CD8-positive, alpha-beta T cell (primary cell): ENCODE measurements at regions of chr1 and their contacts with region 1.

Region 1: DNA sequence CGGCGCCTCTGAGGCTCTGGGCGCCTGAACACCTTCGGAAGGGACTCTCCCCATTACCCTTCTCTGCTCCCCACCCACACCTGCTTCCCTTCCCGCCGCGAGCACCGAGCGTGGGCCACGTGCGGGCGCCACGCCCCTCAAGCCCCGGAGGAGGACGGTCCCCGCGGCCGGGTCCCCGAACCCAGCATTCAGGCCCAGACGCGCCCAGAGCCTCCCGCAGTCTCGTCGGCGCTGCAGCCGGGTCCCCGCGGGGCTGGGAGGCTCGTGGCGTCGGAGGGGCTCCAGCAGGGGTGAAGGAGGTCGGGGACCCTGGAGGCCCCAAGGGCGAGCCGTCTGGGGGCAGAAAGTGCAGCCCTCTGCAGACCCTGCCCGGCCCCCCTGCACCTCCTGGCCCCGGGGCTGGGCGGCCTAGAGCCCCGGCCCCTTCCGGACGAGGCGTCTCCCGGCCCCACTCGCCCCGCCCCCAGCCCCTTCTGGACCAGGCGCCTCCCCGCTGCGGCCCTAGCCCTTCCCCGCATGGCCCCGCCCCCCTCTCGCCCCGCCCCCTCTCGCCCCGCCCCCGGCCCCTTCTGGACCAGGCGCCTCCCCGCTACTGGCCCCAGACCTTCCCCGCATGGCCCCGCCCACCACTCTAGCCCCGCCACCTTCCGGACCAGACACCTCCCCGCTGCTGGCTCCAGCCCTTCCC is 378 bp upstream of the SMIM1 start:
- DNase-seq: peak; percentile 70 to 91 (median 87)
- ATAC-seq: peak; percentile 79
- H3K4me3 ChIP-seq: peak overlapping the region; percentile 39 to 71
- H3K4me3 Mint-ChIP-seq: peak overlapping the region; percentile 80
- H3K27ac ChIP-seq: no peak overlapping the region
- H3K27ac Mint-ChIP-seq: no peak overlapping the region
- H3K4me1 ChIP-seq: peaks cover 10% of the 10 kb centered on the region
- H3K4me1 Mint-ChIP-seq: peaks cover 10% of the 10 kb centered on the region
- H3K27me3 ChIP-seq: no peaks in the 10 kb centered on the region
- H3K27me3 Mint-ChIP-seq: peaks cover 3% of the 10 kb centered on the region
- CTCF ChIP-seq: no peak

Region 2: GRCh38 chr1:3732434-3733093 is 39.6 kb before region 1 on chr1:
- CTCF ChIA-PET with region 1: no interaction called
- POLR2A ChIA-PET with region 1: no interaction called
- intact Hi-C with region 1: no loop called
- DNase-seq: no peak
- ATAC-seq: no peak
- H3K4me3 ChIP-seq: no peak overlapping the region
- H3K4me3 Mint-ChIP-seq: no peak overlapping the region
- H3K27ac ChIP-seq: no peak overlapping the region
- H3K27ac Mint-ChIP-seq: no peak overlapping the region
- H3K4me1 ChIP-seq: no peaks in the 10 kb centered on the region
- H3K4me1 Mint-ChIP-seq: no peaks in the 10 kb centered on the region
- H3K27me3 ChIP-seq: no peaks in the 10 kb centered on the region
- H3K27me3 Mint-ChIP-seq: no peaks in the 10 kb centered on the region
- CTCF ChIP-seq: no peak

Region 3: DNA sequence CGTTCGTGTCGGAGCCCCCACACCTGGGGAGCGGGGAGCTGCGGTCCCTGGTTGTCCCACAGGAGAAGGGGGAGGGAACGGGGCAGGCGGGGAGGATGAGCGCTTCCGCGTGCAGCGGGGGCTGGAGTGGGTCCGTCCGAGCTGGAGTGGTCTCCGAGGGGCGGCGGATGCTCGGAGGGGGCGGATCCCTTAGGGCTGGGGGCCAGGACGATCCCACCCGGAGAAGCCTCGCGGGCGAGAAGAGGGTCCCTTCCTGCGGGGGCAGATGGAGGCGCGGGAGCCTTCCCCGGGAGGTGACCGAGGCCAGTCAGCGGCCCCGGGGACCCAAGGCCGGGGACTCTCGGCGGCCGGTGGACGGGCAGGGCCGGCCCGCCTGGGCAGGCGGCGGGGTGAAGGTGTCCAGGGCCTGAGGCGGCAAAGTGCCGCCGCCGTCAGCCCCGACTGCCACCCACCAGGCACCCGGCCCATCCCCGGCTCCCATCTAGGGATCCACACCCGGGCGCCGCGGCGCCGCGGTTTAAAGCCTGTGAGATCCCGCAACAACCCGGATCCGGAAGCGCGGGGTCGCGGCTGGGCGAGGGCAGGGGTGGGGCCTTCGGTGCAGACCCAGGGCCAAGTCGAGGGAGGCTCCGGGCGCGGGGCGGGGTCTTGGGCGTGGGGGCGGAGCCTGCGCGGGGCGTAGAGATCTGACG is 25.2 kb before region 1 on chr1:
- CTCF ChIA-PET with region 1: no interaction called
- POLR2A ChIA-PET with region 1: no interaction called
- intact Hi-C with region 1: loop called (anchors 1 kb)
- DNase-seq: peak; percentile 66 to 90 (median 86)
- ATAC-seq: peak; percentile 97
- H3K4me3 ChIP-seq: peak overlapping the region; percentile 51 to 63
- H3K4me3 Mint-ChIP-seq: peak overlapping the region; percentile 81
- H3K27ac ChIP-seq: peak overlapping the region; percentile 46 to 47
- H3K27ac Mint-ChIP-seq: peak overlapping the region; percentile 73
- H3K4me1 ChIP-seq: peaks cover 10% of the 10 kb centered on the region
- H3K4me1 Mint-ChIP-seq: peaks cover 27% of the 10 kb centered on the region
- H3K27me3 ChIP-seq: no peaks in the 10 kb centered on the region
- H3K27me3 Mint-ChIP-seq: no peaks in the 10 kb centered on the region
- CTCF ChIP-seq: no peak